Calu3 (cell line): ENCODE measurements at regions of chr4 and their contacts with region 1.

Region 1: DNA sequence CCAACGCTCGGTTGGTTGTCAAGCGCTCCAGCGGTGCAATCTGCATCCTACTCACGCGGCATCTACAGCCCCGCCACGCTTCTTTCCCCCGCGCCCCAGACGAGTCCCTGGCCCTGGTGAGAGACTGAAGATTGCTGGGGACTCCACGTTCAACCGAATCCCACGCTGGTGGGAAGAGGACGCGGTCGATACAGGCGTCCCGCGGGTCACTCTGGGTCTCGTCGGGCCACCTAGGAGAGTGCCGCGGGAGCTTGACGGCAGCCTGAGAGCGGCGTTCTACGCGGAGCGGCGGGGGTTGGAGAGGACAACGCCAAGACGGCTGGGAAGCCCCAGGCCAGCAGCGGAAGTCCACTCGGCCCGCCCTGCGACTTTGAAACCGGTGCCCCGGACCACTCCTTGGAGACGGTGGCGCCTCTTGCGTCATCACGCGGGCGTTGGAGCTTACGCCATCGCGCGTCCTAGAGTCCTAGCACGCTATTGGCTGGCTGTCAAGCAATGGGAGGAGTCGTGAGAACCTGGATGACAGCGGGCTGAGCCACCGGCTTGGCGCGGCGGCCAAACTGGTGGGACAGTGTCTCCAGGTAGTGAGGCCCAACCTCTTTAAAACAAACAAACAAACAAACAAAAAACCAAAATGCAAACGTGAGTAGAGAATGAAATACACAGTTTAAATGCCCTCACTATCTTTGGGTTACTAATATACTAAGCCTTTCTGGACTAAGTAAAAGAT is at the start of gene SCLT1:
- DNase-seq: peak; percentile 94
- H3K4me3 Mint-ChIP-seq: no peak within 1 kb of the TSS
- H3K27ac Mint-ChIP-seq: no peak within 1 kb of the TSS
- H3K4me1 Mint-ChIP-seq: peaks cover 9% of the 10 kb centered on the region
- H3K27me3 Mint-ChIP-seq: no peaks in the 10 kb centered on the region
- CTCF ChIP-seq: no peak
- total RNA-seq, gene SCLT1: 19.6 and 21.4 TPM in 2 replicates

Region 2: GRCh38 chr4:128737098-128737513 is 356.2 kb before region 1 on chr4:
- CTCF ChIA-PET with region 1: no interaction called
- intact Hi-C with region 1: no loop called
- DNase-seq: no peak
- H3K4me3 Mint-ChIP-seq: no peak overlapping the region
- H3K27ac Mint-ChIP-seq: no peak overlapping the region
- H3K4me1 Mint-ChIP-seq: no peaks in the 10 kb centered on the region
- H3K27me3 Mint-ChIP-seq: no peaks in the 10 kb centered on the region
- CTCF ChIP-seq: no peak

Region 3: GRCh38 chr4:128809477-128810330 is 283.7 kb before region 1 on chr4 and contains the start of gene JADE1:
- CTCF ChIA-PET with region 1: no interaction called
- intact Hi-C with region 1: loop called (anchors 5 kb)
- DNase-seq: peak; percentile 87
- H3K4me3 Mint-ChIP-seq: peak within 1 kb of the TSS; percentile 81
- H3K27ac Mint-ChIP-seq: peak within 1 kb of the TSS; percentile 92
- H3K4me1 Mint-ChIP-seq: peaks cover 8% of the 10 kb centered on the region
- H3K27me3 Mint-ChIP-seq: no peaks in the 10 kb centered on the region
- CTCF ChIP-seq: no peak
- total RNA-seq, gene JADE1: 29.9 and 33.9 TPM in 2 replicates

Region 4: GRCh38 chr4:128942607-128943006 is 150.7 kb before region 1 on chr4:
- CTCF ChIA-PET with region 1: no interaction called
- intact Hi-C with region 1: no loop called
- DNase-seq: no peak
- H3K4me3 Mint-ChIP-seq: no peak overlapping the region
- H3K27ac Mint-ChIP-seq: no peak overlapping the region
- H3K4me1 Mint-ChIP-seq: no peaks in the 10 kb centered on the region
- H3K27me3 Mint-ChIP-seq: no peaks in the 10 kb centered on the region
- CTCF ChIP-seq: no peak

Region 5: DNA sequence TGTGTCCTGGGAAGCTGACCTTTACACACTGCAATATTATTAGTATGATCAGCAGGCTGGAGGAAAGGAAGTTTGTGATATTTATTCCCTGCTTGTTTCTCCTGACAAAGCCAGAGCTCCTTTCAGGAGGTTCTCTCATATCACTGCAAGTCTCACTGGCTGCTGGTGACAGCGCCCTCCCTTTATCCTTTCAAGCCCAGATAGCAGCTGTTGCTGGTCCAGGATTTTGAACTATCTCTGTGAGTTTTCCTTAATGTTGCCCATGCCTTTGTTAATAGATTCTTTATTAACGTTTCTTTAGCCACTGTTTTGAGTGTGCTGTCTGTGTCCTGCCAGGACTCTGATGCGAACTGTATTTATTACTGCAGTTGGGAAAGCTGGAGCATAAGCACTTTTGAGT is 521.3 kb after region 1 on chr4:
- CTCF ChIA-PET with region 1: no interaction called
- intact Hi-C with region 1: no loop called
- DNase-seq: no peak
- H3K4me3 Mint-ChIP-seq: no peak overlapping the region
- H3K27ac Mint-ChIP-seq: no peak overlapping the region
- H3K4me1 Mint-ChIP-seq: no peaks in the 10 kb centered on the region
- H3K27me3 Mint-ChIP-seq: no peaks in the 10 kb centered on the region
- CTCF ChIP-seq: no peak